Panc1 (cell line): ENCODE measurements at regions of chr7 and their contacts with region 1.

Region 1: GRCh38 chr7:47561594-47562439 is 20.1 kb downstream of the TNS3 start:
- DNase-seq: no peak
- ATAC-seq: peak; percentile 13
- H3K4me3 ChIP-seq: no peak overlapping the region
- H3K27ac ChIP-seq: peak overlapping the region; percentile 99
- H3K4me1 ChIP-seq: peaks cover 96% of the 10 kb centered on the region
- H3K27me3 ChIP-seq: no peaks in the 10 kb centered on the region
- CTCF ChIP-seq: no peak

Region 2: DNA sequence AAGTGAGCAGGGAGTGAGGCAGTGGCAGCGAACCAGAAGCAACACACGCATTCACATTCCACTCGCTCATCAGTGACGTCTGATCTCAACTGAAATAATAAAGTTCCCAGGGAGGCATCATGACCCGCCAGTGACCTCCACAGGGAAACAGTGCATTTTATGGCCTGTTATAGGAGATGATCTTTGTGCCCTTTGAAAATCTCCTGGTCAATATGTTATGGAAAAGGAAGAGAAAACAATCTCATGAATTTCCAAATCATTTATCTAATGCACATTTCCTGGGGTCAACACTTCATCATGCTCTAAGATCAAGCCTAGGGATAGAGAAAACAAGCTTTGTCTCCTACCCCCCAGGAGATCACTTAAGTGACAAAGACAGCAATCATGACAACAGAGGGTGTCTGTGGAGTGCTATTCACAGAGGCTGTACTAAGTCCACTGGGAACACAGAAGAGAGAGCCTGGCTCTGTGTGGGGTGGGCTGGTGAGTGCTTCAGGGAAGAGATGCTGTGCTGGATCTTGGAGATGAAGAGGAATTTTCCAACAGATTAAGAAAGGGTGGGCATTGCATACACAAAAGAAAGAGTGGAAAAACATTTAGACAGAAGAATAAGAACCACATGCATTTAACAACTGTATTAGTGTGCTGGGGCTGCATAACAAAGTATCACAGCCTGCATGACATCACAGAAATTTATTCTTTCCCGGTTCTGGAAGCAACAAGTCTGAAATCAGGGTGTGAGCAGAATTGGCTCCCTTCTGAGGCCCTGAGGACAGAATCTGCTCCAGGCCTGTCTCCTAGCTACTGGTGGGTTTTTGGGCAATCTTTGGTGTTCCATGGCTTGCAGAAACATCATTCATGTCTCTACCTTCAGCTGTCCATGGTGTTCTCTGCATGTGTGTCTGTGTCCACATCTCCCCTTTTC is 1026.9 kb before region 1 on chr7:
- CTCF ChIA-PET with region 1: no interaction called
- POLR2A ChIA-PET with region 1: no interaction called
- in situ Hi-C with region 1: no loop called
- intact Hi-C with region 1: no loop called
- DNase-seq: no peak
- ATAC-seq: no peak
- H3K4me3 ChIP-seq: no peak overlapping the region
- H3K27ac ChIP-seq: no peak overlapping the region
- H3K4me1 ChIP-seq: no peaks in the 10 kb centered on the region
- H3K27me3 ChIP-seq: no peaks in the 10 kb centered on the region
- CTCF ChIP-seq: no peak

Region 3: DNA sequence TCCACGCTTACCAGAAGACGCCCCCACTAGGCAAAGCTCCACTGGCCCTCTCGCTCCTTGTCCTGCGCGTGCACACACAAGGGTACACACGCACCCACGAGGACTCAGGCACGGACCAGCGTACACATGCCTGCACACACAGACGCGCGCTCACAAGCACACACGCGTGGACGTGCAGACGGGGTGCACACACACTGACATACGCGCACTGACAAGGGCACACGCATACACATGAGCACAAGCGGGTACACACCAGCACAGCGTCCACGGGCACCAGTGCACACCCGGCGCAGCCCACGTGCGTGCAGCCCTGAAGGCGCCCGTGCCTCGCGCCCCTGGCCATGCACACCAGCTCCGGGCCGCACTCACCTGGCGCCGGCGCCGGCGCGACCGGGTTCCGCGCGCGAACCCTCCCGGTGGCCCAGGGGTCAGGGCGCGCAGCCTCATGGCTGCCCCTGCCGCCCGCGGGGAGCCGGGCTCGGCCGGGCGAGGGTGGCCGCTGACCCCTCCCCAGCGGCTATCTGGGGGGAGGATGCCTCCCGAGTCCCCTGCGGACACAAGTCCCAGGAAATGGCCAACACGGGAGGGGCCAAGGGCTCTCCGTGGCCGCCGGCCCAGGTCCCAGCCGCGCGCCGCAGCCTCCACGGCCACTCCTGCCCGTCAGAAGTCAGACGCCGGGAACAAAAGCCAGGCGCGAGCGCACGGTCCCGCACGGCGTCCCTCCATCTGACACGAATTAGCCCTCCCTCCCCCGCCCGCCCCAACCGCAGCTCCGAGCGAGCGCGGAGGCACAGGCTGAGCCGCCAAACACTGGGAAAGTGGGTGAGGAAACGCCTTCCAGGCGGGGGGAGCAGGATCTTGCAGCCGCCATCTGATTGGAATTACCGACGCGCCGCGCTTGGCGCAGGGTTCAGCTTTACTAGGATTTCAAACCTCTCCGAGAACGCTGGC is 24.9 kb before region 1 on chr7:
- CTCF ChIA-PET with region 1: no interaction called
- POLR2A ChIA-PET with region 1: interaction called, 11 read pairs
- in situ Hi-C with region 1: no loop called
- intact Hi-C with region 1: no loop called
- DNase-seq: no peak
- ATAC-seq: peak; percentile 22
- H3K4me3 ChIP-seq: peak overlapping the region; percentile 42 to 66
- H3K27ac ChIP-seq: peak overlapping the region; percentile 99
- H3K4me1 ChIP-seq: peaks cover 87% of the 10 kb centered on the region
- H3K27me3 ChIP-seq: no peaks in the 10 kb centered on the region
- CTCF ChIP-seq: no peak

Region 4: GRCh38 chr7:48274662-48275061 is 712.8 kb after region 1 on chr7:
- CTCF ChIA-PET with region 1: no interaction called
- POLR2A ChIA-PET with region 1: interaction called, 10 read pairs
- in situ Hi-C with region 1: no loop called
- intact Hi-C with region 1: no loop called
- DNase-seq: no peak
- ATAC-seq: peak; percentile 38; the same call in 1 of the 2 replicates
- H3K4me3 ChIP-seq: no peak overlapping the region
- H3K27ac ChIP-seq: no peak overlapping the region
- H3K4me1 ChIP-seq: no peaks in the 10 kb centered on the region
- H3K27me3 ChIP-seq: peaks cover 14% of the 10 kb centered on the region
- CTCF ChIP-seq: no peak